GM18951 (cell line): ENCODE measurements at regions of chr6 and their contacts with region 1.

Region 1: DNA sequence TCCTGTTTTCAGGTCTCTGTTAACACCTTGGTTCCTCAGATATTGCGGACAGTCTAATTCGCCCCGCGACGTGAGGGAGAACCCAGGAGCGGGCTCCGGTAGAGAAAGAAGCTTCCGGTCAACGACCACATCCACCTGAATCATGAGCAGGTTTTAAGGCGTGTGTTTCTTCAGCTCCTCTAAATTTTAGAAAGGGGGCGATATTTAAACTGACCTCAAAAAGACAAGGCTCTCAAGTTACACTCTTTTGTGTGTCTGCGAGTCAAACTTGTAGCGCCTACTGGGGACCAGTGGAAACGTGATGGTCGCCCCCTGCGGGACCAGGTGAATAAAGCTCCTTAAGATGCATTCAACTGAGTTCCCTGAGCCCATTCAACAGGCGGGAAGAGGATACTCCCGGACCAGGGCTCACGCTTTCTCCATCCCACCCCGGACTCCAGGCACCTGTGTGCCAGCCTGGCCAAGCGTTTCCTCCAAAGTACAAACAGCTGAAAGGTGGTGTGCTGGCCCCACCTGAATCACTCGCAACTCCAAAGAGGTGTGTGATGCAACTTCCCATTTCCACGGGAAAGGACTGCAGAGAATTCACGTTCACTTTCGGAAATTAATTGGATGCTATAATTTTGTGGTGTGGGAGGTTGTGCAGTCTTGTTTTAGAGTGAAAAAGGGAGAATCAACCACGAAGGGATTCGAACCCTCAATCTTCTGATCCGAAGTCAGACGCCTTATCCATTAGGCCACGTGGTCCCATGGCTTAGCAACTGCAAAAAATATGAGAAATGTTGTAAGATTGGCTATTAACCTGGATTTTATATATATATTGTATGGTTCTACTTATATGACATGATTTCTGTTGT is 17.0 kb downstream of the GPX5 start:
- POLR2A ChIP-seq: no peak

Region 2: GRCh38 chr6:28496099-28496779 is 46.4 kb before region 1 on chr6:
- in situ Hi-C with region 1: no loop called
- POLR2A ChIP-seq: no peak

Region 3: DNA sequence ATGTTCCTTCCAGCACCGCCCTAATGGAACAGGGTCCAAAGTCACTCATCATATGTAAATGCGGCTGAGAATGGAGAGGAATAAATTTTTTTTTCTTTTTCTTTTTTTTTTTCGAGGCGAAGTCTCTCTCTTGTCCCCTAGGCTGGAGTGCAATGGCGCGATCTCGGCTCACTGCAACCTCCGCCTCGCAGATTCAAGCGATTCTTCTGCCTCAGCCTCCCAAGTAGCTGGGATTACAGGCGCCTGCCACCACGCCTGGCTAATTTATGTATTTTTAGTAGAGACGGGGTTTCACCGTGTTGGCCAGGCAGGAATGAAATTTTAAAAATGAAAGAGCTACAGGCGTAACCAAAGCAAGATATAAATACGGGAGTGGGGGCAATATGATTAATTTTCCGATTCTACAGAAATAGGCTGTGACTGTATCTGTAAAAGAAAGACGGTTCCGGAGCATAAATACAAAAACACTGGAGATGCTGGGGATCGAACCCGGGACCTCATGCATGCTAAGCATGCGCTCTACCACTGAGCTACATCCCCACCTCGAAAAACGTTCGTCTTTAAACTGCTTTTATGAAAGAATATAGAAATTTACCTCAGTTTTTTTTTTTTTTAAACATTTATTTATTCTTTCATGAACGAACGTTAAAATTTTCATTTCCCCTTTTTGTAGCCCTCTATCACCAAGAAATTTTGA is 115.2 kb after region 1 on chr6:
- in situ Hi-C with region 1: loop called (anchors 10 kb)
- POLR2A ChIP-seq: no peak

Region 4: DNA sequence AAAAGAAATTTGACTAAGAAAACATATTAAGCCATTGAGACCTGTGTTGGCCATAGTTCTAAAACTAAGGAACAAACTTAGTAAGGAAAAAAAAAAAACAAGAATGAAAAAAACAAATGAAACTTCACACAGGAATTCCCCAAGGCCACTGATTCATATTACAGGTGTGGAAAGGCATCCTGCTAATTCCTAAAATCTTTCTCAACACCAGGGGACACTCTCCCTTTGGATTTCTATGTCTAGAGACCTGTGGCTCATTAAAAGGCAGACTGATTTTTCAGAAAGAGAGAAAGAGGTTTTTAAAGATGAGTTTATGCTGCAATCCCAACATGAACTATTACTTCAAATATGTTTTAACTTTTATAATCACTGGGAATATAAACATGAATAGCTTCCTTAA is 871.9 kb after region 1 on chr6 and contains the start of gene OR12D1:
- in situ Hi-C with region 1: no loop called
- POLR2A ChIP-seq: no peak